ENCODE measurements at regions of chr19 and their contacts with region 1.

Region 1: DNA sequence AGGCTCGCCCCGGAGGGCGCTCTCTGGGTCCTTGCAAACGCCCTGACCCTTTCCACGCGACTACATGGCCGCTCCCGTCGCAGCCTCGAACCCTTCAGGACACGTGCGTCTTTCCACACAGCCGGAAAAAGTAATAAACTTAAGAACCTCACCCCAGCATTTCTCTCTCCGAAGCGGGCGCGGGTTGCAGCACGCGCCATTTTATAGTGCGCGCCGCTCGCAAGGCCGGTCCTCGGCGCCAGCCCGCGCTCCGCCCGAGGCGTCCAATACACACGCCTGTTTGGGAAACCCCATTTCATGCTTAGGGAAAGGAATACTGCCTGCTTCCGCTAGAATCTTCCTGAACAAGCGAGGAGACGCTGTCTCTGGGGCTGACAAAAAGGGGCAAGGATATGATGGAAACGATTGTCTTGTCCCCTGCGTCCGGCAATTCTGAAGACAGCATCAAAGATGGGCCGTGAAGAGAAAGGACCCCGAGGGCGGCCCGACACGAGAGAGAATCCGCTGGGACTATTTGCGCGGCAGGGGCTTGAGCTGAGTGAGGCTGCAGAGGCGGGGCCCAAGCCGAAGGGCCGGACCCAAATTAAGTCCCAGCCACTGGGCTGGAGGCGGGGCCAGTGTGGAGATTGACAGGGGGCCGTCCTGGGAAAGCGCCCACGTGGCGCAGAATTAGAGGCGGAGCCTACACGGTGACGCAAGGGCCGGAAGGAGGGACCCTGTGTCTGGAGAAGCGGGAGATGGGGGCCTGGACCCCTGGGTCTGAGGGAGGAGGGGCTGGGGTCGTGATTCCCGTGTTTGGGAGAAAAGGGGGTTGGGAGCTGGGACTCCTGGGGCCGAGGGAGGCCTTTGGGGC is 14.4 kb downstream of the ACP4 start:
- DNase-seq: peak; percentile 98
- ATAC-seq: peak; percentile 92
- H3K4me3 ChIP-seq: peak overlapping the region; percentile 89 to 94
- H3K27ac ChIP-seq: peak overlapping the region; percentile 93
- H3K4me1 ChIP-seq: peaks cover 9 to 24% of the 10 kb centered on the region in 2 experiments
- H3K27me3 ChIP-seq: no peaks in the 10 kb centered on the region
- CTCF ChIP-seq: no peak
- POLR2A ChIP-seq: peak; percentile 98
- RAD21 ChIP-seq: no peak

Region 2: GRCh38 chr19:50794439-50795237 is 10.0 kb before region 1 on chr19:
- CTCF ChIA-PET with region 1: interaction called, 6 read pairs
- POLR2A ChIA-PET with region 1: interaction called, 19 read pairs
- RAD21 ChIA-PET with region 1: no interaction called
- intact Hi-C with region 1: no loop called
- DNase-seq: no peak
- ATAC-seq: peak; percentile 61
- H3K4me3 ChIP-seq: no peak overlapping the region
- H3K27ac ChIP-seq: peak overlapping the region; percentile 40
- H3K4me1 ChIP-seq: peaks cover 11 to 32% of the 10 kb centered on the region in 2 experiments; a peak in 3 of 4 replicates
- H3K27me3 ChIP-seq: no peaks in the 10 kb centered on the region
- CTCF ChIP-seq: peak in 2 of 3 experiments; percentile 64 to 78; a peak in 4 of 6 replicates
- POLR2A ChIP-seq: peak; percentile 54
- RAD21 ChIP-seq: peak; percentile 46; the same call in 1 of the 2 replicates

Region 3: GRCh38 chr19:50820549-50821247 is 16.1 kb after region 1 on chr19:
- CTCF ChIA-PET with region 1: no interaction called
- POLR2A ChIA-PET with region 1: interaction called, 12 read pairs
- RAD21 ChIA-PET with region 1: no interaction called
- intact Hi-C with region 1: no loop called
- DNase-seq: no peak
- ATAC-seq: peak; percentile 37; the same call in 1 of the 2 replicates
- H3K4me3 ChIP-seq: peak overlapping the region in 1 of 2 experiments; percentile 37; a peak in 2 of 4 replicates
- H3K27ac ChIP-seq: no peak overlapping the region; the same call in 1 of the 2 replicates
- H3K4me1 ChIP-seq: peaks cover 24 to 52% of the 10 kb centered on the region in 2 experiments
- H3K27me3 ChIP-seq: no peaks in the 10 kb centered on the region
- CTCF ChIP-seq: no peak
- POLR2A ChIP-seq: no peak
- RAD21 ChIP-seq: no peak

Region 4: GRCh38 chr19:50835785-50836542 is 31.3 kb after region 1 on chr19:
- CTCF ChIA-PET with region 1: no interaction called
- POLR2A ChIA-PET with region 1: no interaction called
- RAD21 ChIA-PET with region 1: no interaction called
- intact Hi-C with region 1: loop called (anchors 2 kb)
- DNase-seq: peak; percentile 57
- ATAC-seq: peak; percentile 93
- H3K4me3 ChIP-seq: peak overlapping the region; percentile 55 to 60
- H3K27ac ChIP-seq: peak overlapping the region; percentile 62
- H3K4me1 ChIP-seq: peaks cover 15 to 29% of the 10 kb centered on the region in 2 experiments
- H3K27me3 ChIP-seq: no peaks in the 10 kb centered on the region
- CTCF ChIP-seq: no peak
- POLR2A ChIP-seq: peak; percentile 74
- RAD21 ChIP-seq: no peak

Region 5: GRCh38 chr19:50994129-50994528 is 189.5 kb after region 1 on chr19:
- CTCF ChIA-PET with region 1: no interaction called
- POLR2A ChIA-PET with region 1: no interaction called
- RAD21 ChIA-PET with region 1: no interaction called
- intact Hi-C with region 1: no loop called
- DNase-seq: no peak
- ATAC-seq: peak; percentile 59
- H3K4me3 ChIP-seq: no peak overlapping the region
- H3K27ac ChIP-seq: no peak overlapping the region
- H3K4me1 ChIP-seq: peaks cover 16 to 35% of the 10 kb centered on the region in 2 experiments
- H3K27me3 ChIP-seq: no peaks in the 10 kb centered on the region
- CTCF ChIP-seq: no peak
- POLR2A ChIP-seq: no peak
- RAD21 ChIP-seq: no peak

Measured in HCT116 (cell line).